ENCODE measurements at regions of chr14 and their contacts with region 1.

Region 1: GRCh38 chr14:68816262-68816942 is 23.5 kb upstream of the ZFP36L1 start:
- DNase-seq: peak; percentile 89 to 94
- H3K4me3 ChIP-seq: peak overlapping the region; percentile 53
- H3K4me3 Mint-ChIP-seq: peak overlapping the region; percentile 77
- H3K27ac Mint-ChIP-seq: peak overlapping the region; percentile 90
- H3K4me1 ChIP-seq: peaks cover 27% of the 10 kb centered on the region
- H3K4me1 Mint-ChIP-seq: peaks cover 18% of the 10 kb centered on the region
- H3K27me3 ChIP-seq: no peaks in the 10 kb centered on the region
- H3K27me3 Mint-ChIP-seq: no peaks in the 10 kb centered on the region
- CTCF ChIP-seq: peak; percentile 88 to 97

Region 2: DNA sequence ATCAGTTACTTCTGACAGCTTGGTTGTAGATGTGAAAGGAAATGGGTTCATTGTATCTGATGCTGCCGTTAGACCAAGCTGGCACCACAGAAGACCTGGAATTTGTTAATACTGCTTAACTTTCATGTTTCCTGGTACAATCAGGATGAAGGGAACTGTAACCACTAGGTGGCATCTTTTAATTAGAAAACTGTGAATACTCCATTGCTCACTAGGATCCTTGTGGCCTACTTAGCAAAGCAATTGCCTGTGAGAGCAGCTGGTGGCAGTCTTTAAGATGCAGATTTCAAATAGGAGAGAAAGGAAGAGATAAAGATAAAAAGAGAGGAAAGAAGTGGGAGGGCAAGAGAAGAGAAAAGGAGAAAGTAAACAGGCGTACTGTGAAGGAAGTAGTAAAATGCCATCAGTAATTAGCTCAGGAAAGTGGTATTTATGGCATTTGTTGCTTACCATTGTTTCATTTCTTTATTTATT is 882.4 kb before region 1 on chr14:
- CTCF ChIA-PET with region 1: interaction called, 6 read pairs
- POLR2A ChIA-PET with region 1: interaction called, 3 read pairs
- intact Hi-C with region 1: loop called (anchors 2 kb)
- DNase-seq: peak in 1 of 2 experiments; percentile 64
- H3K4me3 ChIP-seq: no peak overlapping the region
- H3K4me3 Mint-ChIP-seq: no peak overlapping the region
- H3K27ac Mint-ChIP-seq: peak overlapping the region; percentile 9
- H3K4me1 ChIP-seq: peaks cover 7% of the 10 kb centered on the region; the same call in 1 of the 2 replicates
- H3K4me1 Mint-ChIP-seq: peaks cover 7% of the 10 kb centered on the region
- H3K27me3 ChIP-seq: no peaks in the 10 kb centered on the region
- H3K27me3 Mint-ChIP-seq: no peaks in the 10 kb centered on the region
- CTCF ChIP-seq: peak; percentile 65 to 72

Region 3: DNA sequence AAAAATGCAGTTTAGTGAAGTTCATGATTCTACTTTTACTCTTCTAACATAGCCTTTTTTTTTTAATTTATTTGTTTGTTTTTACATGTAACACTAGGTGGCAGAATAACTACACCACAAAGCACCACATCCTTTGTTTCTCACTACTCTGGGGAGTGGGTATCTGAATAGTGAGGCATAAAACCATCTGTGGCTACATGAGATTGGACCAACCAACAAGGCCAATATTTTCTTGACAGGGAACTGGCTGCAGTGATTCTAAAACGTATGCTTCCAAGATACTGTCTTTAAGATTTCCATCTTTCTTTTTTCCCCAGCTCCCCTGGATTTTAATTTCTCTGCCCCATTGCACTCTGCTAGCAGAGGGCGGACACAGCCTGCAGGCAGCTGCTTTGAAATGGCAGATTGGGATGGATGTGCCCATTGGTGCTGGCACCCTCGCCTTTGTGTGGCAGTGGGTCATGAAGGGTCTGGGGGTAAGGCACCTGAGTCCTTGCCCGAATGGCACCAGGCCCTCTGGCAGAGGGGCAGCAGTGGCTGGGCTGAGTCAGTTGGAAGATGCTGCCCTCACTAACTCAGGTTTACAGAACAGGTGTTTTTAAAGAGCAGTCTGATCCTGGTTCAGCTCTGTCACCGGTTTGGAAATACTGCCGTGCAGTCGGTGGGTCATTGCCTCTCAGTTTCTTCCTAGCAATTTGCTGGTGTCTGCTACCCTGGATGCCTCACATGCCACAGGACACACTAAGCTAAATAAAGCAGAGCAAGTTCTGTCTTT is 567.7 kb before region 1 on chr14:
- CTCF ChIA-PET with region 1: interaction called, 12 read pairs
- POLR2A ChIA-PET with region 1: no interaction called
- intact Hi-C with region 1: loop called (anchors 1 kb)
- DNase-seq: peak in 1 of 2 experiments; percentile 36
- H3K4me3 ChIP-seq: no peak overlapping the region
- H3K4me3 Mint-ChIP-seq: no peak overlapping the region
- H3K27ac Mint-ChIP-seq: no peak overlapping the region
- H3K4me1 ChIP-seq: peaks cover 53% of the 10 kb centered on the region
- H3K4me1 Mint-ChIP-seq: peaks cover 50% of the 10 kb centered on the region
- H3K27me3 ChIP-seq: no peaks in the 10 kb centered on the region
- H3K27me3 Mint-ChIP-seq: no peaks in the 10 kb centered on the region
- CTCF ChIP-seq: peak; percentile 30 to 42

Region 4: GRCh38 chr14:68377459-68377858 is 438.9 kb before region 1 on chr14:
- CTCF ChIA-PET with region 1: no interaction called
- POLR2A ChIA-PET with region 1: no interaction called
- intact Hi-C with region 1: loop called (anchors 10 kb)
- DNase-seq: peak in 1 of 2 experiments; percentile 61
- H3K4me3 ChIP-seq: no peak overlapping the region
- H3K4me3 Mint-ChIP-seq: no peak overlapping the region
- H3K27ac Mint-ChIP-seq: peak overlapping the region; percentile 8
- H3K4me1 ChIP-seq: peaks cover 9% of the 10 kb centered on the region
- H3K4me1 Mint-ChIP-seq: peaks cover 7% of the 10 kb centered on the region
- H3K27me3 ChIP-seq: no peaks in the 10 kb centered on the region
- H3K27me3 Mint-ChIP-seq: no peaks in the 10 kb centered on the region
- CTCF ChIP-seq: no peak

Region 5: GRCh38 chr14:68718023-68718995 is 98.1 kb before region 1 on chr14:
- CTCF ChIA-PET with region 1: interaction called, 5 read pairs
- POLR2A ChIA-PET with region 1: no interaction called
- intact Hi-C with region 1: loop called (anchors 2 kb)
- DNase-seq: no peak
- H3K4me3 ChIP-seq: no peak overlapping the region
- H3K4me3 Mint-ChIP-seq: no peak overlapping the region
- H3K27ac Mint-ChIP-seq: no peak overlapping the region
- H3K4me1 ChIP-seq: peaks cover 13% of the 10 kb centered on the region
- H3K4me1 Mint-ChIP-seq: peaks cover 5% of the 10 kb centered on the region
- H3K27me3 ChIP-seq: no peaks in the 10 kb centered on the region
- H3K27me3 Mint-ChIP-seq: no peaks in the 10 kb centered on the region
- CTCF ChIP-seq: peak in 1 of 2 experiments; percentile 17

Measured in Caco-2 (cell line).